Common myeloid progenitor, CD34-positive (primary cell): ENCODE measurements at regions of chr14 and their contacts with region 1.

Region 1: DNA sequence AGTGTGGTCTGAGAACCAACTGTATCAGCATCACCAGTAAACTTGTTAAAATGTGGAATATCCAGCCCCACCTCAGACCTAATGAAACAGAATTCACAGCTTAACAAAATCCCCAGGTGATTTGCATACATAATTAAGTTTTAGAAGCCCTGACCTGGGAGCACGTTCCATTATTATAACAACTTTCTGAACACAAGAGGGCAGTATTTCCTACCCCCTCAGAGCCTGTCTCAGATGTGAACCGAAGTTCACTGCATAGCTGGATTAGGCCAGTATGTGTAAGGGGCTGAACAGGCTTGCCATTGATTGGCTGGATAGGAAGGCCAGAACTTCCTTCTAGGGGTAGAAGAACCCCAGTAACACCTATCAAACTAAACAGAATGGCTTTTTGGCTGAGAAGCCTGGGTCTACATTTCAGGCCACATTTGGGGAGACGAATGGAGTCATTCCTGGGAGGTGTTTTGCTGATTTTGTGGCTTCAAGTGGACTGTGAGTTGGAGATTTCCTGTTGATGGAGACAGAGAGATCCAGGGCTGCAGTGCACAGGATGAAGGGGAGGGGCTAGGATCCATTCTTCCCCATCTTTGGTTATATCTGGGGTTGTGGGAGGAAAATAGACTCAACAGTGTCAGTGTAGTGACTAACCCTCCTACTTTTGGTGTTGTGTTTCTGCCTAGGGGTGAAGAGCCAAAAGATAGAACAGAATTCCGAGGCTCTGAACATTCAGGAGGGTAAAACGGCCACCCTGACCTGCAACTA is 94.7 kb upstream of the OR4E1 start:
- DNase-seq: peak; percentile 46 to 67 (median 64)
- H3K4me3 ChIP-seq: no peak overlapping the region
- H3K27ac ChIP-seq: no peak overlapping the region
- H3K4me1 ChIP-seq: peaks cover 0 to 3% (median 0%) of the 10 kb centered on the region in 4 experiments
- H3K27me3 ChIP-seq: no peaks in the 10 kb centered on the region

Region 2: GRCh38 chr14:21575661-21576060 is 192.6 kb before region 1 on chr14:
- CTCF ChIA-PET with region 1: no interaction called
- POLR2A ChIA-PET with region 1: no interaction called
- DNase-seq: no peak
- H3K4me3 ChIP-seq: no peak overlapping the region
- H3K27ac ChIP-seq: no peak overlapping the region
- H3K4me1 ChIP-seq: no peaks in the 10 kb centered on the region
- H3K27me3 ChIP-seq: peaks cover 0 to 3% (median 0%) of the 10 kb centered on the region in 5 experiments

Region 3: GRCh38 chr14:21748869-21749303 is 19.4 kb before region 1 on chr14:
- CTCF ChIA-PET with region 1: interaction called, 24 read pairs
- POLR2A ChIA-PET with region 1: no interaction called
- DNase-seq: peak; percentile 54 to 81 (median 79)
- H3K4me3 ChIP-seq: peak overlapping the region in 5 of 7 experiments; percentile 29 to 52 (median 41)
- H3K27ac ChIP-seq: no peak overlapping the region
- H3K4me1 ChIP-seq: peaks cover 0 to 4% (median 1%) of the 10 kb centered on the region in 4 experiments
- H3K27me3 ChIP-seq: peaks cover 0 to 2% (median 0%) of the 10 kb centered on the region in 5 experiments